ENCODE measurements at regions of chr5 and their contacts with region 1.

Region 1: GRCh38 chr5:1255081-1255561 is 29.9 kb downstream of the SLC6A18 start:
- DNase-seq: peak in 8 of 9 experiments; percentile 31 to 75 (median 58)
- ATAC-seq: peak; percentile 91
- H3K4me3 ChIP-seq: peak overlapping the region in 1 of 2 experiments; percentile 17
- H3K4me3 Mint-ChIP-seq: peak overlapping the region; percentile 75
- H3K27ac ChIP-seq: no peak overlapping the region
- H3K27ac Mint-ChIP-seq: peak overlapping the region; percentile 25
- H3K4me1 ChIP-seq: peaks cover 18% of the 10 kb centered on the region
- H3K4me1 Mint-ChIP-seq: peaks cover 18% of the 10 kb centered on the region
- H3K27me3 ChIP-seq: no peaks in the 10 kb centered on the region
- H3K27me3 Mint-ChIP-seq: no peaks in the 10 kb centered on the region
- CTCF ChIP-seq: no peak

Region 2: GRCh38 chr5:1227669-1228068 is 27.5 kb before region 1 on chr5:
- CTCF ChIA-PET with region 1: no interaction called
- POLR2A ChIA-PET with region 1: no interaction called
- intact Hi-C with region 1: loop called in 1 of 2 experiments (anchors 2 kb)
- DNase-seq: no peak
- ATAC-seq: no peak
- H3K4me3 ChIP-seq: no peak overlapping the region
- H3K4me3 Mint-ChIP-seq: no peak overlapping the region
- H3K27ac ChIP-seq: no peak overlapping the region
- H3K27ac Mint-ChIP-seq: no peak overlapping the region
- H3K4me1 ChIP-seq: no peaks in the 10 kb centered on the region
- H3K4me1 Mint-ChIP-seq: peaks cover 8% of the 10 kb centered on the region
- H3K27me3 ChIP-seq: no peaks in the 10 kb centered on the region
- H3K27me3 Mint-ChIP-seq: peaks cover 6% of the 10 kb centered on the region
- CTCF ChIP-seq: no peak

Region 3: DNA sequence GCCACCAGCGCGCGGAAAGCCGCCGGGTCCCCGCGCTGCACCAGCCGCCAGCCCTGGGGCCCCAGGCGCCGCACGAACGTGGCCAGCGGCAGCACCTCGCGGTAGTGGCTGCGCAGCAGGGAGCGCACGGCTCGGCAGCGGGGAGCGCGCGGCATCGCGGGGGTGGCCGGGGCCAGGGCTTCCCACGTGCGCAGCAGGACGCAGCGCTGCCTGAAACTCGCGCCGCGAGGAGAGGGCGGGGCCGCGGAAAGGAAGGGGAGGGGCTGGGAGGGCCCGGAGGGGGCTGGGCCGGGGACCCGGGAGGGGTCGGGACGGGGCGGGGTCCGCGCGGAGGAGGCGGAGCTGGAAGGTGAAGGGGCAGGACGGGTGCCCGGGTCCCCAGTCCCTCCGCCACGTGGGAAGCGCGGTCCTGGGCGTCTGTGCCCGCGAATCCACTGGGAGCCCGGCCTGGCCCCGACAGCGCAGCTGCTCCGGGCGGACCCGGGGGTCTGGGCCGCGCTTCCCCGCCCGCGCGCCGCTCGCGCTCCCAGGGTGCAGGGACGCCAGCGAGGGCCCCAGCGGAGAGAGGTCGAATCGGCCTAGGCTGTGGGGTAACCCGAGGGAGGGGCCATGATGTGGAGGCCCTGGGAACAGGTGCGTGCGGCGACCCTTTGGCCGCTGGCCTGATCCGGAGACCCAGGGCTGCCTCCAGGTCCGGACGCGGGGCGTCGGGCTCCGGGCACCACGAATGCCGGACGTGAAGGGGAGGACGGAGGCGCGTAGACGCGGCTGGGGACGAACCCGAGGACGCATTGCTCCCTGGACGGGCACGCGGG is 39.9 kb after region 1 on chr5 and contains the start of gene TERT:
- CTCF ChIA-PET with region 1: no interaction called
- POLR2A ChIA-PET with region 1: no interaction called
- intact Hi-C with region 1: no loop called
- DNase-seq: peak; percentile 41 to 71 (median 60)
- ATAC-seq: peak; percentile 87
- H3K4me3 ChIP-seq: peak within 1 kb of the TSS in 1 of 2 experiments; percentile 23
- H3K4me3 Mint-ChIP-seq: peak within 1 kb of the TSS; percentile 58
- H3K27ac ChIP-seq: no peak within 1 kb of the TSS
- H3K27ac Mint-ChIP-seq: no peak within 1 kb of the TSS
- H3K4me1 ChIP-seq: peaks cover 8% of the 10 kb centered on the region
- H3K4me1 Mint-ChIP-seq: peaks cover 4% of the 10 kb centered on the region
- H3K27me3 ChIP-seq: peaks cover 0 to 8% of the 10 kb centered on the region in 2 experiments
- H3K27me3 Mint-ChIP-seq: peaks cover 3% of the 10 kb centered on the region
- CTCF ChIP-seq: no peak
- total RNA-seq, gene TERT: 0.08 TPM in 1 of 2 experiments, not detected in the other

Region 4: GRCh38 chr5:1385395-1386273 is 130.5 kb after region 1 on chr5:
- CTCF ChIA-PET with region 1: no interaction called
- POLR2A ChIA-PET with region 1: no interaction called
- intact Hi-C with region 1: no loop called
- DNase-seq: peak; percentile 73 to 93 (median 88)
- ATAC-seq: peak; percentile 77
- H3K4me3 ChIP-seq: peak overlapping the region; percentile 66 to 73
- H3K4me3 Mint-ChIP-seq: peak overlapping the region; percentile 97
- H3K27ac ChIP-seq: peak overlapping the region; percentile 94 to 96
- H3K27ac Mint-ChIP-seq: peak overlapping the region; percentile 100
- H3K4me1 ChIP-seq: peaks cover 17% of the 10 kb centered on the region
- H3K4me1 Mint-ChIP-seq: peaks cover 30% of the 10 kb centered on the region
- H3K27me3 ChIP-seq: no peaks in the 10 kb centered on the region
- H3K27me3 Mint-ChIP-seq: no peaks in the 10 kb centered on the region
- CTCF ChIP-seq: no peak

Measured in CD8-positive, alpha-beta T cell (primary cell).